Right ventricle myocardium inferior (tissue), 1 donor: ENCODE measurements at regions of chr7 and their contacts with region 1.

Region 1: DNA sequence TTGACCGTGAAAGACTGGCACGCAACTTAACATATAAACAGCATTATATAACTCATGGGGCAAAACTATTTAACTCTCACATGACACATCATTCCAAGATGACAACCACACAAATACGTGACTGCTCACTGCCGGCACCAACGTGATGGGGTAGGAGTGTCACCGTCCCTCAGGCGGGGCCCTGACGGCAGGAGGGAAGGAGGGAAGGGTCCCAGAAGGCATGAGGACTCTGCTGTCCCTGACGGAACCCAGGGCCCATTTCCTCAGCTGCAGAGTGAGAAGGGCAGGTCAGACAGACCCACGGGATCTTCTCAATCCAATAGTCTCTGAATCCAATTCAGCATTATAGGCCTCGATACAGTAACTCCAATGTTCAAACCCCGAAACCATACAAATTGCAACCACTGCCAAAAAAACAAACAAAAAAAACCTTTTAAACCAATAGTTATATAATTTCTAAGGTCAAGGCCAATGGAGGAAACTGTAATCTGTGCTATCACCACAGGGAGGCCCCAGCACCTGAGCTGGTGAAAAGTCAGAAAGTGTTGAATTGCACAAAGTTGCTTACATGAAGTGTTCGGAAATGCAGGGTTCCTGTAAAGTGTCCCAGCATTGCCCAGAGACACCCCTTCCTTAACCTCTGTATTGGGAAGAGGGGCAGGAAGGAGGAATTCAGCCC is 137.4 kb downstream of the TNS3 start:
- DNase-seq: no peak
- ATAC-seq: peak; percentile 27

Region 2: GRCh38 chr7:47571331-47572093 is 127.0 kb after region 1 on chr7:
- intact Hi-C with region 1: loop called (anchors 5 kb)
- DNase-seq: peak; percentile 92
- ATAC-seq: peak; percentile 73